ENCODE measurements at regions of chr16 and their contacts with region 1.

Region 1: DNA sequence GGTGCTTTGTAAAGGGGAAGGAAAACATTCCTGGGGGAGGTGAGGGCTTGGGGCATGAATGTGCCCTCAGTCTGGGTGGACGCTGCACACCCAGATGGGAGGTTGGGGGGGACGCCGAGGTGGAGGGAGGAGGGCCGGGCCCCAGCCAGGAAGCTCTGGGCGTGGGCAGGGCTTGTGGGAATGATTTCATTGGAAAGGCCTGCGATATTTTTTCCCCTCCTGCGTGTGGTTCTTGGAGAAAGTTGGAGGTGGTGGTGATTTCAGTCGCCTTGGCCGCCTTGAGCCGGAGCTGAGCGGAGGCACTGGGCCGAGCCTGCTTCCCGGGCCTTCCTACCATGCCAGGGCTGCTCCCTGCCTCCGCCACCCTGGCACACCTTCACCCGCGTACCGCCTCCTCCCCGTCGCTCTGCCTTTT is 26.4 kb upstream of the CLEC18A start:
- DNase-seq: peak; percentile 59 to 79
- ATAC-seq: peak in 2 of 4 donors; percentile 17 to 51
- H3K4me3 ChIP-seq: peak overlapping the region; percentile 47
- H3K27ac ChIP-seq: peak overlapping the region; percentile 73
- H3K4me1 ChIP-seq: peaks cover 23% of the 10 kb centered on the region
- H3K27me3 ChIP-seq: no peaks in the 10 kb centered on the region
- CTCF ChIP-seq: no peak

Region 2: GRCh38 chr16:69859105-69859989 is 65.4 kb before region 1 on chr16:
- intact Hi-C with region 1: loop called in 1 of 2 experiments (anchors 5 kb)
- DNase-seq: no peak
- ATAC-seq: peak; percentile 50 to 67 (median 60)
- H3K4me3 ChIP-seq: no peak overlapping the region
- H3K27ac ChIP-seq: peak overlapping the region; percentile 61
- H3K4me1 ChIP-seq: peaks cover 18% of the 10 kb centered on the region
- H3K27me3 ChIP-seq: no peaks in the 10 kb centered on the region
- CTCF ChIP-seq: peak; percentile 41

Region 3: GRCh38 chr16:69937465-69937951 is 12.7 kb after region 1 on chr16:
- intact Hi-C with region 1: no loop called
- DNase-seq: no peak
- ATAC-seq: no peak
- H3K4me3 ChIP-seq: no peak overlapping the region
- H3K27ac ChIP-seq: no peak overlapping the region
- H3K4me1 ChIP-seq: no peaks in the 10 kb centered on the region
- H3K27me3 ChIP-seq: no peaks in the 10 kb centered on the region
- CTCF ChIP-seq: no peak

Measured in psoas muscle (tissue), 8 donors.